ENCODE measurements at regions of chr18 and their contacts with region 1.

Region 1: GRCh38 chr18:5237723-5238370 is 40.8 kb upstream of the AKAIN1 start:
- DNase-seq: peak; percentile 90 to 94 (median 91)
- ATAC-seq: peak; percentile 92 to 99 (median 98)
- H3K4me3 ChIP-seq: peak overlapping the region; percentile 62 to 91 (median 86)
- H3K27ac ChIP-seq: peak overlapping the region; percentile 98 to 100 (median 99)
- H3K4me1 ChIP-seq: peaks cover 0 to 39% (median 27%) of the 10 kb centered on the region in 12 donors
- H3K27me3 ChIP-seq: no peaks in the 10 kb centered on the region
- CTCF ChIP-seq: peak in 6 of 12 donors; percentile 12 to 48 (median 32)
- POLR2A ChIP-seq: peak in 1 of 2 donors; percentile 75

Region 2: GRCh38 chr18:5159080-5159479 is 78.8 kb before region 1 on chr18:
- intact Hi-C with region 1: loop called in 1 of 10 experiments (anchors 5 kb)
- DNase-seq: no peak
- ATAC-seq: no peak
- H3K4me3 ChIP-seq: no peak overlapping the region
- H3K27ac ChIP-seq: no peak overlapping the region
- H3K4me1 ChIP-seq: peaks cover 0 to 12% (median 0%) of the 10 kb centered on the region in 12 donors
- H3K27me3 ChIP-seq: no peaks in the 10 kb centered on the region
- CTCF ChIP-seq: no peak
- POLR2A ChIP-seq: no peak

Region 3: GRCh38 chr18:5180254-5180653 is 57.6 kb before region 1 on chr18:
- intact Hi-C with region 1: no loop called
- DNase-seq: no peak
- ATAC-seq: no peak
- H3K4me3 ChIP-seq: no peak overlapping the region
- H3K27ac ChIP-seq: no peak overlapping the region
- H3K4me1 ChIP-seq: no peaks in the 10 kb centered on the region
- H3K27me3 ChIP-seq: peaks cover 0 to 7% (median 0%) of the 10 kb centered on the region in 9 donors
- CTCF ChIP-seq: no peak
- POLR2A ChIP-seq: no peak

Region 4: DNA sequence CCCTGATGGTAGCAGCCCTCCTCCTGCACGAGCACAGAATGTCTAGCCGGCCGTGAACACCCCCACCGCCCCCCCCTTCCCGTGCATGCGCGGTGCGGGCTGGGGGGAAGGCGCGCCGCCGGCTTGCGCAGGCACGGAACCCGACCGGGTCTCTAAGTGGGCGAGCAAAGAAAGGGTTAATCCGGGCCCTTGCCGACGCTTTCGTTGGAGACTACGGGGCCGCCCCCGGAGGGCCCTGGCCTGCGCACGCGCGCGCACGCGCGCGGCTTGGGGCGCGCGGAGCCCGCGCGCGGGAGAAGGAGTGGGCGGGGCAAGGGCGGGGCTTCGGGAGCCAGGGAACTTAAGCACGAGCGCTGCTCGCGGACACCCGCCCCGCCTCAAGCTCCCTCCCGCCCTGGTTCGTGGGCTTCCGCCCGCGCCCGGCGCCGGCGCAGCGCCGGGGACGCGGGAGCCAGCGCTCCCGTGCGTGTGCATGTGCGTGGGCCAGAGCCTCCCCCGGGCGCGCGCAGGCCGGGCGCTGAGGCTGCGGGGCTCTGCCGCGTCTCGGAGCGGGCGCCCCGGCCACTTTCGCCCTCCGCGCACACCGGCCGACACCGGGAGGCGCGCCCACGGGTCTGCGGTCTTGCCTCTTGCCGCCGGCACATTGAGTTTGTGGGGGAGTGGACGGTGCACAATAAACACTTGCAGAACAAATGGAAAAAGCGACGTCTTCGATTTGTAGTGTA is 58.3 kb after region 1 on chr18:
- intact Hi-C with region 1: loop called (anchors 1 to 5 kb)
- DNase-seq: peak; percentile 96 to 98 (median 97)
- ATAC-seq: peak; percentile 86 to 93 (median 90)
- H3K4me3 ChIP-seq: peak overlapping the region; percentile 42 to 97 (median 78)
- H3K27ac ChIP-seq: peak overlapping the region; percentile 92 to 100 (median 97)
- H3K4me1 ChIP-seq: peaks cover 0 to 19% (median 12%) of the 10 kb centered on the region in 12 donors
- H3K27me3 ChIP-seq: peaks cover 0 to 4% (median 0%) of the 10 kb centered on the region in 9 donors
- CTCF ChIP-seq: no peak
- POLR2A ChIP-seq: peak in 1 of 2 donors; percentile 48